Caco-2 (cell line): ENCODE measurements at regions of chr4 and their contacts with region 1.

Region 1: GRCh38 chr4:101347557-101348366 is 436 bp upstream of the PPP3CA start:
- DNase-seq: peak; percentile 98
- H3K4me3 ChIP-seq: peak overlapping the region; percentile 92
- H3K4me3 Mint-ChIP-seq: peak overlapping the region; percentile 95
- H3K27ac Mint-ChIP-seq: peak overlapping the region; percentile 85
- H3K4me1 ChIP-seq: peaks cover 26% of the 10 kb centered on the region
- H3K4me1 Mint-ChIP-seq: peaks cover 15% of the 10 kb centered on the region
- H3K27me3 ChIP-seq: no peaks in the 10 kb centered on the region
- H3K27me3 Mint-ChIP-seq: no peaks in the 10 kb centered on the region
- CTCF ChIP-seq: no peak

Region 2: GRCh38 chr4:101169044-101170014 is 178.4 kb before region 1 on chr4:
- CTCF ChIA-PET with region 1: no interaction called
- POLR2A ChIA-PET with region 1: no interaction called
- intact Hi-C with region 1: loop called (anchors 1 kb)
- DNase-seq: peak; percentile 75 to 76
- H3K4me3 ChIP-seq: no peak overlapping the region
- H3K4me3 Mint-ChIP-seq: no peak overlapping the region
- H3K27ac Mint-ChIP-seq: no peak overlapping the region
- H3K4me1 ChIP-seq: peaks cover 10% of the 10 kb centered on the region; the same call in 1 of the 2 replicates
- H3K4me1 Mint-ChIP-seq: peaks cover 6% of the 10 kb centered on the region
- H3K27me3 ChIP-seq: no peaks in the 10 kb centered on the region
- H3K27me3 Mint-ChIP-seq: no peaks in the 10 kb centered on the region
- CTCF ChIP-seq: peak; percentile 71 to 72

Region 3: DNA sequence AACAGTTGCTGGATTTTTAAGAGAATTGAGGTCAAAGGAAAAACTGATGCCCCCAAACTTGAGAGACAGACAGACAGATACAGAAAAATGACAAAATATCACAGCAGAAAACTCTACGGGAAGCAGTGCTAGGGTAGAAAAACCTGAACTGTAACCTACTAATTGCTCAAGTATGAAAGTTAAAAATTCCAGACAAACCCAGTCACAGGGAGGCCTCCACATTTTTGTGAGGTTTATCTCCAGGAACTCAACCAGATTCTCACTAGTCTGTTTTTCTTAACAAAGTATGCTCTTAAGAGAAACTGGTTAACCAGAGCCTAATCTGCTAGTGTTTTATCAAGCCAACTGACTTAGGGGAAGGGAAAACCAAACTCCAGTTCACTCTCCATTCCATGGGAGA is 19.4 kb after region 1 on chr4:
- CTCF ChIA-PET with region 1: interaction called, 4 read pairs
- POLR2A ChIA-PET with region 1: no interaction called
- intact Hi-C with region 1: loop called (anchors 1 kb)
- DNase-seq: peak in 1 of 2 experiments; percentile 21
- H3K4me3 ChIP-seq: no peak overlapping the region
- H3K4me3 Mint-ChIP-seq: no peak overlapping the region
- H3K27ac Mint-ChIP-seq: peak overlapping the region; percentile 25
- H3K4me1 ChIP-seq: peaks cover 13% of the 10 kb centered on the region
- H3K4me1 Mint-ChIP-seq: peaks cover 14% of the 10 kb centered on the region
- H3K27me3 ChIP-seq: no peaks in the 10 kb centered on the region
- H3K27me3 Mint-ChIP-seq: no peaks in the 10 kb centered on the region
- CTCF ChIP-seq: no peak

Region 4: DNA sequence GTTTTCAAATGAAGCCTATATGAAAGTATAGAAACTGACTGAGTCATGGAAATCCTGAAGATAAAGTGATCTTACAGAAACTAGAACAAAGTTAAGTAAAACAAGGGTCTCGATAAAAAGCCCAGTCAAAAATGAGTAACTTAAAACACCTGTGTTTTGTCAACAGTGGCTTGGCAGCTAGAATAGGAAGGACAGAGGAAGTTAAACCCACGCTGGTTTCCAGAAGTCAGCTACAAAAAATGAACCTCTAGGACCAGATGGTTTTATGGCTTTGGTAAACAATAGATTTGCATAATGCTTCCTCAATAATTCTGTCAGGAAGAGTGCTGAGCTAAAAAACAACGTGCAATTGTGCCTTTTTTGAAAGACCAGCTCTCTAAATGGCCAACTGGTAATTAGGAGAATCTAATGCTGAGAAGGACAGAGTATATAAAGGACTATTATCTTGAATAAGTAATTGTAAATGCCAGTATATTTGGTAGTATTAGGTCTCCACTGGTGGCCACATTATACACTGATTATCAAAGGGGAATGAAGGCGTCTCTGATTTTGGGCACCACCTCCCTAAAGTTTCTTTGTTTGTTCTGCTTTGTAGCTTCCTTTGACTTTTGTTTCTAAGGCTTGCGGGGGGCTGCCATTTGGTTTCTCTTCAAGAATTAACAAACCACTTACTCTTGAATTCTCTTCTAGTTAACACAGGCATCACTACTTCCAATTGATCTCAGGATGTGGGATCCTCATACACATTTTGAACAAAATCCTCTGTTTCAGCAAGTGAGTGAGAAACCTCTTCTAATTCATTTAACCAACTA is 71.8 kb after region 1 on chr4:
- CTCF ChIA-PET with region 1: no interaction called
- POLR2A ChIA-PET with region 1: no interaction called
- intact Hi-C with region 1: loop called (anchors 5 kb)
- DNase-seq: no peak
- H3K4me3 ChIP-seq: no peak overlapping the region
- H3K4me3 Mint-ChIP-seq: no peak overlapping the region
- H3K27ac Mint-ChIP-seq: no peak overlapping the region
- H3K4me1 ChIP-seq: no peaks in the 10 kb centered on the region
- H3K4me1 Mint-ChIP-seq: no peaks in the 10 kb centered on the region
- H3K27me3 ChIP-seq: no peaks in the 10 kb centered on the region
- H3K27me3 Mint-ChIP-seq: no peaks in the 10 kb centered on the region
- CTCF ChIP-seq: no peak

Region 5: DNA sequence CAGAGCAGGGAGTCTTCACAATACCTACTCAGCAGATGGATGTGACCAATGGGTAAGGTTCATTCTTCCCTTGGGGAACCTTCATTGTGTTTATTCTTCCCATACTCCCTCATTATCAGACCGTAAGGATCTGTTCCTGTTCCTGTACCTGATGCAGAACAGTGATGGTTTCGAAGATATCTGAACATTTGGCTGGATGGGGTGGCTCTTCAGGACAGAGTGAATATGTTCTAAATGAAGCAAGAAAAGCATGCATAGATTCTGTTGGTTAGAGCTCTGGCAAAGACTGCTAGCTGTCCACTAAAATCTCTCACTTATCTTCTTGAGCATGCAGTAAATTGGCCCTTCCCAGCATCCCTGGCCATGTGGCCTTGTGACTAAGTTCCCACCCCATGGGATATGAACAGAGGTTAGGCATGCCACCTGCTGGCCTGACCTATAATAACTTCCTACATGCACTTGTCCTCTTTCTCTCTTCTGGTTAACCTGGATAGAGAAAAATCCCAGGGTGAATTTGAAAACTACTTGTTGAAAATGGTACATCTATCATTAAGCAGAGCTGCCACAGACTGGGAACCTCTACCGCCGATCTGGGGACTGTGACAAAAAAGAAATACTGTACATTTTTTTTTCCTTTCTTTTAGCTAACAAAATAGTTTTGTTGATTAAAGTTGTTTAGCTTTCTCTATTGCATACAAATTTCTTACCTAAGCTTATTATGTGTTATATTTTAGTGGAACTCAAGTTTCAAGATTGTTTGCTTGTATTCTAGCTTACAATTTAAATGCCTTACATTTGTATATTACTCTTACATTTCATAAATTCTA is 382.7 kb after region 1 on chr4:
- CTCF ChIA-PET with region 1: no interaction called
- POLR2A ChIA-PET with region 1: no interaction called
- intact Hi-C with region 1: loop called (anchors 5 kb)
- DNase-seq: peak; percentile 72 to 75
- H3K4me3 ChIP-seq: no peak overlapping the region
- H3K4me3 Mint-ChIP-seq: no peak overlapping the region
- H3K27ac Mint-ChIP-seq: no peak overlapping the region
- H3K4me1 ChIP-seq: no peaks in the 10 kb centered on the region
- H3K4me1 Mint-ChIP-seq: no peaks in the 10 kb centered on the region
- H3K27me3 ChIP-seq: no peaks in the 10 kb centered on the region
- H3K27me3 Mint-ChIP-seq: no peaks in the 10 kb centered on the region
- CTCF ChIP-seq: peak; percentile 60 to 62

Region 6: DNA sequence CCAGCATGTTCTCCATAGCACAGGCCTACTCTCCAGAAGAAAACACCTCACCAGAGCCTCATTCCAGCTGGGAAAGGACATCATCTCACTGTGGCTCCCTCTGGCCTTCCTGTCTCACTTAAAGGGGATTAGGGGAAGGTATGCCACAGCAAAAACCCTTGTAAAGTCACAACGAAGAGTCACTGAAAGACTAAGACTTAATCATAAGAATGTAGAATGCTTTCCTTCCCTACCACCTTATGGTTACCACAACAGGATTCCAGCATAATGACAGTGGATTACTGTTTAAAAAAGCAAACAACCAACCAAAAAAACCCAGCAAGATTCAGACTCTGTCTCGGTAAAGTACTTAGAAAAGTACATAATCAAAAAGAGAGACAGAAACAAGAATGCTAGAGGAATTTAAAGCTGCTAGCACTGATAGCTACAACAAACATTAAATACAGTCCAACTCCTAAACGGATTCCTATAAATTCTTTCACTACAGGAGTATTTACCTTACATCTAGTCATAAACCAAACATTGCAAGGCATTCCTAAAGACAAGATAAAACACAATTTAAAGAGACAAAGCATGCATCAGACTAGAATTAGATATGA is 517.8 kb after region 1 on chr4:
- CTCF ChIA-PET with region 1: no interaction called
- POLR2A ChIA-PET with region 1: no interaction called
- intact Hi-C with region 1: loop called (anchors 5 kb)
- DNase-seq: peak; percentile 71 to 78
- H3K4me3 ChIP-seq: no peak overlapping the region
- H3K4me3 Mint-ChIP-seq: peak overlapping the region; percentile 67
- H3K27ac Mint-ChIP-seq: peak overlapping the region; percentile 100
- H3K4me1 ChIP-seq: peaks cover 29% of the 10 kb centered on the region
- H3K4me1 Mint-ChIP-seq: peaks cover 26% of the 10 kb centered on the region
- H3K27me3 ChIP-seq: no peaks in the 10 kb centered on the region
- H3K27me3 Mint-ChIP-seq: no peaks in the 10 kb centered on the region
- CTCF ChIP-seq: no peak

Region 7: GRCh38 chr4:101921329-101921728 is 573.6 kb after region 1 on chr4:
- CTCF ChIA-PET with region 1: no interaction called
- POLR2A ChIA-PET with region 1: no interaction called
- intact Hi-C with region 1: no loop called
- DNase-seq: no peak
- H3K4me3 ChIP-seq: no peak overlapping the region
- H3K4me3 Mint-ChIP-seq: no peak overlapping the region
- H3K27ac Mint-ChIP-seq: no peak overlapping the region
- H3K4me1 ChIP-seq: peaks cover 13% of the 10 kb centered on the region
- H3K4me1 Mint-ChIP-seq: no peaks in the 10 kb centered on the region
- H3K27me3 ChIP-seq: no peaks in the 10 kb centered on the region
- H3K27me3 Mint-ChIP-seq: no peaks in the 10 kb centered on the region
- CTCF ChIP-seq: no peak

Region 8: GRCh38 chr4:102263011-102263787 is 915.4 kb after region 1 on chr4:
- CTCF ChIA-PET with region 1: no interaction called
- POLR2A ChIA-PET with region 1: no interaction called
- intact Hi-C with region 1: loop called (anchors 5 kb)
- DNase-seq: peak in 1 of 2 experiments; percentile 45
- H3K4me3 ChIP-seq: no peak overlapping the region
- H3K4me3 Mint-ChIP-seq: no peak overlapping the region
- H3K27ac Mint-ChIP-seq: no peak overlapping the region
- H3K4me1 ChIP-seq: no peaks in the 10 kb centered on the region
- H3K4me1 Mint-ChIP-seq: peaks cover 6% of the 10 kb centered on the region
- H3K27me3 ChIP-seq: no peaks in the 10 kb centered on the region
- H3K27me3 Mint-ChIP-seq: no peaks in the 10 kb centered on the region
- CTCF ChIP-seq: peak; percentile 36 to 52

Region 9: GRCh38 chr4:102387552-102388150 is 1039.9 kb after region 1 on chr4:
- CTCF ChIA-PET with region 1: no interaction called
- POLR2A ChIA-PET with region 1: no interaction called
- intact Hi-C with region 1: no loop called
- DNase-seq: no peak
- H3K4me3 ChIP-seq: no peak overlapping the region
- H3K4me3 Mint-ChIP-seq: no peak overlapping the region
- H3K27ac Mint-ChIP-seq: no peak overlapping the region
- H3K4me1 ChIP-seq: no peaks in the 10 kb centered on the region
- H3K4me1 Mint-ChIP-seq: peaks cover 7% of the 10 kb centered on the region
- H3K27me3 ChIP-seq: no peaks in the 10 kb centered on the region; the same call in 1 of the 2 replicates
- H3K27me3 Mint-ChIP-seq: peaks cover 9% of the 10 kb centered on the region
- CTCF ChIP-seq: no peak